HEK293T (cell line): ENCODE measurements at regions of chr6 and their contacts with region 1.

Region 1: DNA sequence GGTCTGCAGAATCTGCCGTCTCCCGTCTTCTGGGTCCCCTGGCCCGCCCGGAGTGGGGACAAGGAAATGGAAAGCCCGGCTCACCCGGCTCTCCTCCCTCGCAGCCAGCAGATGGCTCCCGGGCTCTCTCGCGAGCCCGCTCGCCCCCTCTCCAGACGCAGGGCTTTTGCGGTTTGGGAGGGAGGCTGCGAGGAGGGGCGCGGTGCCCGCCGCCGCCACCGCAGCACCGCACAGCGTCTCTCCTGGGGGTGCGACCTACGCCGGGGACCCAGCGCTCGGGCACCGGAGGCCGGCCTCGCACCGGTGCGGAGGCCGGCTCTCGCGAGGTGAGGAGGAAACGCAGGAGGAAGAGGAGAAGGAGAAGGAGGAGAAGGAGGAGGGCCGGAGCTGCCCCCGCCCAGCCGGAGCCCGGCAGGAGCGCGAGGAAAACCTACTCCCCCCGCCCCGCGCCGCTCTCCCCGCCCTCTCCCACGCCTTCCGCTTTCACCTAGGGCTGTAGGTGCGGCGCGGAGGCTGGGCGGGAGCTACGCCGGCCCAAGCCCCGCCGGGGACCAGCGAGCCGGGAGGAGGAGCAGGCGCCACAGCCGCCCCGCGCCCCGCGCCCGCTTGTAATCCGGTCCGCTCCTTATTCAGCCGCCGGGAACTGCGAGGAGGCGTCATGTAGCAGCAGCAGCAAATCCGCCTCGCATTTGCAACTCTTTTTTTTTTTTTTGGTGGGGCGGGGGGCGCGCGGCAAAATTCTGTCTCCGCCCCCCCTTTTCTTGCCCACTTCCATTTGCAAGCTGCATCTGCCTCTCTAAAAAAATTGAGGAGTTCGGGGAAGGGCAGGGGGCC is at the start of gene CARMIL1:
- DNase-seq: peak; percentile 89

Region 2: DNA sequence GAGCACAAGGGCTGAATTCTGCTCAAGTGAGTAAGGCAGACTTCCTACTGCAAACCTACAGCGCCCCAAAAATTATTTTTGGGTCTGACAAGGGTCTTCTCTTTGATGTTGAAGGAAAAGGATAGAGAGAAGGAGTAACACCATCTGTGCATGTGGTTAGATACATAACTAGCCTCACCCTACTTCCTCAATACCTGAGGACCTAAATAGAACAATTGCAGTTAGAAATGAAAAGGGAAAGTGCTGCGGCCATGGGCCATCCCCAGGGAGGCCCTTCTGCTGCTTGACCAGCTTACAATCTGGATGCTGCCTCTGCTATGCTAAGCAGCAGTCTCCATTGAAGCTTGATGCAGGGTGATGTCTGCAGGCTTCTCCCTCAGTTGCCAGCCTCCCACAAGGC is 417.2 kb before region 1 on chr6:
- CTCF ChIA-PET with region 1: no interaction called
- POLR2A ChIA-PET with region 1: no interaction called
- DNase-seq: no peak

Region 3: GRCh38 chr6:25266456-25267100 is 12.6 kb before region 1 on chr6:
- CTCF ChIA-PET with region 1: interaction called, 18 read pairs
- POLR2A ChIA-PET with region 1: interaction called, 4 read pairs
- DNase-seq: no peak

Region 4: GRCh38 chr6:25490018-25490801 is 211.1 kb after region 1 on chr6:
- CTCF ChIA-PET with region 1: interaction called, 48 read pairs
- POLR2A ChIA-PET with region 1: interaction called, 8 read pairs
- DNase-seq: peak; percentile 68

Region 5: DNA sequence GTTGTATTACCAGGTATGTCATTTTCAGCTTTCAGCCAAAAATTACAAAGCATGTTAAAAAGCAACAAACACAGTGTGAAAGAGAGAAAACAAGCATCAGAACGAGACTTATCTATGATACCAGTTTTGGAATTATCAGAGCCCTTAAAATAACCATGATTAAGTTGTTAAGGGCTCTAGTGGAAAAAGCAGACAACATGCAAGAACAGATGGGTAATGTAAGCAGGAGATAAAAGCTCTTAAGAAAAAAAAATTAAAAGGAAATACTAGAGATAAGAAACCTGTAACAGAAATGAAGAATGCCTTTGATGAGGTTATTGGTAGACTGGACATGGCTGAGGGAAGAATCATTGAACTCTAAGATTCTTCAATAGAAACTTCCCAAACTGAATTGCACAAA is 245.4 kb after region 1 on chr6:
- CTCF ChIA-PET with region 1: no interaction called
- POLR2A ChIA-PET with region 1: no interaction called
- DNase-seq: no peak